PC-9 (cell line): ENCODE measurements at regions of chr4 and their contacts with region 1.

Region 1: DNA sequence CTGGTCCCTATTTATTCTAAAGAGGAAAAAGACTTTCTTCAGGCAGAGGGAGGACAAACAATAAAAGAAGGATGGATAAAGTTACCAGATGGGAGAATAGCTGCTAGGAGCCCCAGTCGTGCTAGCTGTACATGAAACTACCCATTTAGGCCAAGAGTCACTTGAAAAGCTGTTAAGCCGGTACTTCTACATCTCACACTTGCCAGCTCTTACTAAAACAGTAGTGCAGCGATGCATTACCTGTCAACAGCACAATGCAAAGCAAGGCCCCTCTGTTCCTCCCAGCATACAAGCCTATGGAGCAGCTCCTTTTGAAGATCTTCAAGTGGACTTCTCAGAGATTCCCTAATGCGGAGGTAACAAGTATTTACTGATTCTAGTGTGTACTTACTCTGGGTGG is 1138.8 kb downstream of the ARAP2 start:
- DNase-seq: peak; percentile 40 to 82
- H3K4me3 ChIP-seq: peak overlapping the region; percentile 61
- H3K27ac ChIP-seq: peak overlapping the region; percentile 61
- H3K4me1 ChIP-seq: peaks cover 24% of the 10 kb centered on the region
- H3K27me3 ChIP-seq: no peaks in the 10 kb centered on the region
- CTCF ChIP-seq: no peak

Region 2: DNA sequence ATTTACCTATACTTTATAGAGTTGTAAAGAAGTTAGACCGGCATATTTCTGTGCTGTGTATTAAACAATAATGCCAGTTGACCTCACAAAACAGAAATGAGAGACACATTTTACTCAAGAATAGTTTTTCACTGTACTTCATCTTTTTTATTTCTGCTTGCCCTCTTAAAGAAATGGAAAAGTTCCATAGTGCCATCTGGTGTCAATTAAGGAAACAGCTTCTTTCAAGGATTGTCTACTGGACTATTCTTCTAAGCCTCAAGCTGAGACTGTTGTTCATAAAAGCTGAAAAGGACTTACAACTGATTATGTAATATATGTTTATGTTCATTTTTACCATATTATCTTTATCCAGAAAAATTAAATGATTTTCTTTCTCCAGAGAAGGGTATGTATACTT is 384.9 kb before region 1 on chr4:
- CTCF ChIA-PET with region 1: interaction called, 3 read pairs
- POLR2A ChIA-PET with region 1: no interaction called
- intact Hi-C with region 1: loop called (anchors 5 kb)
- DNase-seq: no peak
- H3K4me3 ChIP-seq: no peak overlapping the region
- H3K27ac ChIP-seq: no peak overlapping the region
- H3K4me1 ChIP-seq: no peaks in the 10 kb centered on the region
- H3K27me3 ChIP-seq: no peaks in the 10 kb centered on the region
- CTCF ChIP-seq: peak; percentile 69

Region 3: GRCh38 chr4:35025152-35025834 is 80.2 kb before region 1 on chr4:
- CTCF ChIA-PET with region 1: no interaction called
- POLR2A ChIA-PET with region 1: no interaction called
- intact Hi-C with region 1: loop called (anchors 1 kb)
- DNase-seq: no peak
- H3K4me3 ChIP-seq: no peak overlapping the region
- H3K27ac ChIP-seq: no peak overlapping the region
- H3K4me1 ChIP-seq: no peaks in the 10 kb centered on the region
- H3K27me3 ChIP-seq: no peaks in the 10 kb centered on the region
- CTCF ChIP-seq: no peak

Region 4: DNA sequence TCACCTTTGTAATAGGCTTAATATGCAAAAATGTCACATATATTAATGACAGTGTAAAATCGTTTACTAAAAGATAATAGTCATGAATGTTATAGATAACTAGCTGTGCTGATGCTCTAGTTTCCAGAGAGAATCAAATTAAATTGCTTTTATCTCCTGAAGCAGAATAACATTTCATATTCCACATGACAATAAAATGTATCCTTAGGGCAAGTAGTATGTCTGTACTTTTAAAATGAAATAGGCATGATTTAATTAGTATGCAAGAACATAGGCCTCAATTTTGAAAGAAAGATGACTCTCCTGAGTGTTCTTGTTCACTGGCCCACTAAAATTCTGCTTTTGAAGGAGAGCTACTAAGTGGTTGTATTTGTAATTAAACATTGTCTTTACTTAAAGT is 111.8 kb after region 1 on chr4:
- CTCF ChIA-PET with region 1: no interaction called
- POLR2A ChIA-PET with region 1: interaction called, 11 read pairs
- intact Hi-C with region 1: no loop called
- DNase-seq: no peak
- H3K4me3 ChIP-seq: no peak overlapping the region
- H3K27ac ChIP-seq: no peak overlapping the region
- H3K4me1 ChIP-seq: no peaks in the 10 kb centered on the region
- H3K27me3 ChIP-seq: no peaks in the 10 kb centered on the region
- CTCF ChIP-seq: no peak

Region 5: GRCh38 chr4:36244257-36245079 is 1139.0 kb after region 1 on chr4 and contains the start of gene ARAP2:
- CTCF ChIA-PET with region 1: no interaction called
- POLR2A ChIA-PET with region 1: no interaction called
- intact Hi-C with region 1: no loop called
- DNase-seq: peak; percentile 76 to 90
- H3K4me3 ChIP-seq: peak within 1 kb of the TSS; percentile 75
- H3K27ac ChIP-seq: peak within 1 kb of the TSS; percentile 81
- H3K4me1 ChIP-seq: peaks cover 29% of the 10 kb centered on the region
- H3K27me3 ChIP-seq: no peaks in the 10 kb centered on the region
- CTCF ChIP-seq: no peak
- total RNA-seq, gene ARAP2: 17.7 and 25.8 TPM in 2 replicates